ENCODE measurements at regions of chr3 and their contacts with region 1.

Region 1: GRCh38 chr3:181700168-181701087 is 11.3 kb upstream of the SOX2 start:
- DNase-seq: peak; percentile 69
- ATAC-seq: peak; percentile 77
- H3K4me3 ChIP-seq: peak overlapping the region; percentile 30 to 51
- H3K27ac ChIP-seq: no peak overlapping the region
- H3K4me1 ChIP-seq: peaks cover 0 to 9% of the 10 kb centered on the region in 2 experiments; a peak in 2 of 4 replicates
- H3K27me3 ChIP-seq: no peaks in the 10 kb centered on the region; the same call in 1 of the 2 replicates
- CTCF ChIP-seq: peak; percentile 67 to 83 (median 81)
- POLR2A ChIP-seq: no peak
- RAD21 ChIP-seq: peak; percentile 70

Region 2: GRCh38 chr3:180690061-180690460 is 1010.4 kb before region 1 on chr3:
- CTCF ChIA-PET with region 1: no interaction called
- POLR2A ChIA-PET with region 1: no interaction called
- RAD21 ChIA-PET with region 1: no interaction called
- intact Hi-C with region 1: loop called (anchors 5 kb)
- DNase-seq: no peak
- ATAC-seq: no peak
- H3K4me3 ChIP-seq: no peak overlapping the region
- H3K27ac ChIP-seq: no peak overlapping the region
- H3K4me1 ChIP-seq: no peaks in the 10 kb centered on the region
- H3K27me3 ChIP-seq: peaks cover 43% of the 10 kb centered on the region
- CTCF ChIP-seq: 0 out of 6 replicates have a peak, but pooled peaks of 2 of the 3 experiments have one; percentile 5 to 24
- POLR2A ChIP-seq: no peak
- RAD21 ChIP-seq: peak; percentile 44

Region 3: DNA sequence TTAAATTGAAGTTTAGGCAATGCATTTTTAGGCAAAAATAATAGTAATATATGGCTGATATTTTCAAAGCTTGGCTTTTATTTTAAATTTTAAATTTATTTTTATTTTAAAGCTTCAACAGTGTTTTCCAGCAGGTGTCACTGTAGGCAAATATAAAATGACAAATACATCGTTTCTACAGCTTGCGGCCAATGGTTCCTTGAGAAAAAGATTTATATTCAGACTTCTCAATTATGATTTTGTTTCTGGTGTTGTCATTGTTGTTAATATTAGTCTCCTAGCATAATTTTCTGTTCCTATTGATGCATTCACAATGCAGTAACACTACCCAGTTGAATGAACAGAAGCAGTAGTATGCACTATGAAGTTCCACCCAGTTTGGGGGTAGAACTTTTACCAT is 490.2 kb before region 1 on chr3:
- CTCF ChIA-PET with region 1: interaction called, 32 read pairs
- POLR2A ChIA-PET with region 1: no interaction called
- RAD21 ChIA-PET with region 1: interaction called in 1 of 2 experiments, 3 read pairs
- intact Hi-C with region 1: loop called (anchors 5 kb)
- DNase-seq: peak; percentile 12
- ATAC-seq: no peak
- H3K4me3 ChIP-seq: no peak overlapping the region
- H3K27ac ChIP-seq: no peak overlapping the region
- H3K4me1 ChIP-seq: no peaks in the 10 kb centered on the region
- H3K27me3 ChIP-seq: peaks cover 33% of the 10 kb centered on the region
- CTCF ChIP-seq: peak in 2 of 3 experiments; percentile 35 to 38; a peak in 4 of 6 replicates
- POLR2A ChIP-seq: no peak
- RAD21 ChIP-seq: peak; percentile 54

Region 4: GRCh38 chr3:181567311-181568075 is 132.9 kb before region 1 on chr3:
- CTCF ChIA-PET with region 1: interaction called, 22 read pairs
- POLR2A ChIA-PET with region 1: interaction called, 3 read pairs
- RAD21 ChIA-PET with region 1: no interaction called
- intact Hi-C with region 1: no loop called
- DNase-seq: no peak
- ATAC-seq: no peak
- H3K4me3 ChIP-seq: no peak overlapping the region
- H3K27ac ChIP-seq: no peak overlapping the region
- H3K4me1 ChIP-seq: no peaks in the 10 kb centered on the region
- H3K27me3 ChIP-seq: peaks cover 64% of the 10 kb centered on the region
- CTCF ChIP-seq: no peak
- POLR2A ChIP-seq: no peak
- RAD21 ChIP-seq: no peak

Region 5: GRCh38 chr3:182133752-182134151 is 433.3 kb after region 1 on chr3:
- CTCF ChIA-PET with region 1: no interaction called
- POLR2A ChIA-PET with region 1: no interaction called
- RAD21 ChIA-PET with region 1: no interaction called
- intact Hi-C with region 1: no loop called
- DNase-seq: no peak
- ATAC-seq: no peak
- H3K4me3 ChIP-seq: no peak overlapping the region
- H3K27ac ChIP-seq: no peak overlapping the region
- H3K4me1 ChIP-seq: peaks cover 0 to 8% of the 10 kb centered on the region in 2 experiments; a peak in 2 of 4 replicates
- H3K27me3 ChIP-seq: no peaks in the 10 kb centered on the region
- CTCF ChIP-seq: no peak
- POLR2A ChIP-seq: no peak
- RAD21 ChIP-seq: no peak

Region 6: GRCh38 chr3:182364723-182365650 is 664.6 kb after region 1 on chr3:
- CTCF ChIA-PET with region 1: no interaction called
- POLR2A ChIA-PET with region 1: no interaction called
- RAD21 ChIA-PET with region 1: no interaction called
- intact Hi-C with region 1: loop called (anchors 10 kb)
- DNase-seq: peak; percentile 94
- ATAC-seq: peak; percentile 83
- H3K4me3 ChIP-seq: peak overlapping the region; percentile 13 to 56
- H3K27ac ChIP-seq: peak overlapping the region; percentile 91
- H3K4me1 ChIP-seq: peaks cover 23 to 29% of the 10 kb centered on the region in 2 experiments
- H3K27me3 ChIP-seq: no peaks in the 10 kb centered on the region
- CTCF ChIP-seq: no peak
- POLR2A ChIP-seq: no peak
- RAD21 ChIP-seq: peak; percentile 32; the same call in 1 of the 2 replicates

Measured in HCT116 (cell line).